Naive thymus-derived CD4-positive, alpha-beta T cell (primary cell): ENCODE measurements at regions of chr1 and their contacts with region 1.

Region 1: GRCh38 chr1:147494998-147495580 is 46.2 kb upstream of the BCL9 start:
- DNase-seq: peak; percentile 27 to 73 (median 65)
- ATAC-seq: peak; percentile 94
- H3K4me3 ChIP-seq: no peak overlapping the region
- H3K4me3 Mint-ChIP-seq: peak overlapping the region in 1 of 10 donors; percentile 49
- H3K27ac ChIP-seq: no peak overlapping the region
- H3K27ac Mint-ChIP-seq: peak overlapping the region in 1 of 9 donors; percentile 33
- H3K4me1 ChIP-seq: no peaks in the 10 kb centered on the region
- H3K4me1 Mint-ChIP-seq: peaks cover 0 to 7% (median 0%) of the 10 kb centered on the region in 7 donors
- H3K27me3 ChIP-seq: peaks cover 0 to 4% of the 10 kb centered on the region in 2 donors
- H3K27me3 Mint-ChIP-seq: peaks cover 0 to 18% (median 0%) of the 10 kb centered on the region in 5 donors

Region 2: DNA sequence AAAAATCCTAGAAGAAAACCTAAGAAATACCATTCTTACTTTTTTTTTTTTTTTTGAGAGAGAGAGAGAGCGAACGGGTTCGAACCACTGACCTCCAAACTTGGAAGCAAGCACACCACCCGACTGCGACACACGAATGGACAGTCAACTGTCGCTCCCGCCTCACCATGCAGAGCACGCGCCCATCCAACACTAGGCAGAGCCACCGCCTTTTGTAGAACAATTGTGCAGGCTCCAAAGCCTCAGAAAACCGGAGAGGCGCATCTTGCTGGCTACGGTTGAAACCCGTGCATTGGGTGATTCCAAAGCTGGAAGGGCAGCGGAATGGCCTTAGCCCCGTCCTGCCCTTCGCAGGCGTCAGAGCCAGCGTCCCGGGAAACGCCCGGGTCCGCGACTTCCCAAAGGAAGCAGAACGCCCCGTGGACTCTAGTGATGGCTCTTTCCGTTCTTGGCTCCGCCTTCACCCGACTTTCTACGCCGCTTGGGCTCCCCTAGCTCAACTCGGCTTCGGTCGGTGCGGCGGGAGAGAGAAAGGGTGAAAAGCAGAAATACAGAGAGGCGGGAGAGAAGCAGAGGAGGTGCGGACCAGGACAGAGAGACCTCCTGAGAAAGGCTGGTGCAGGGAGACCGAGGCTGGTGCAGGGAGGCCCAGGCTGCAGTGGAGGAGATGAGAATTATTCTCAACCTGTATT is 422.6 kb before region 1 on chr1:
- CTCF ChIA-PET with region 1: no interaction called
- POLR2A ChIA-PET with region 1: no interaction called
- intact Hi-C with region 1: no loop called
- DNase-seq: peak in 3 of 9 donors; percentile 17 to 22 (median 18)
- ATAC-seq: no peak
- H3K4me3 ChIP-seq: peak overlapping the region; percentile 14
- H3K4me3 Mint-ChIP-seq: peak overlapping the region; percentile 21 to 90 (median 85)
- H3K27ac ChIP-seq: no peak overlapping the region
- H3K27ac Mint-ChIP-seq: peak overlapping the region in 3 of 9 donors; percentile 9 to 71 (median 26)
- H3K4me1 ChIP-seq: no peaks in the 10 kb centered on the region
- H3K4me1 Mint-ChIP-seq: peaks cover 4 to 39% (median 18%) of the 10 kb centered on the region in 7 donors
- H3K27me3 ChIP-seq: no peaks in the 10 kb centered on the region
- H3K27me3 Mint-ChIP-seq: peaks cover 51 to 78% (median 70%) of the 10 kb centered on the region in 5 donors

Region 3: DNA sequence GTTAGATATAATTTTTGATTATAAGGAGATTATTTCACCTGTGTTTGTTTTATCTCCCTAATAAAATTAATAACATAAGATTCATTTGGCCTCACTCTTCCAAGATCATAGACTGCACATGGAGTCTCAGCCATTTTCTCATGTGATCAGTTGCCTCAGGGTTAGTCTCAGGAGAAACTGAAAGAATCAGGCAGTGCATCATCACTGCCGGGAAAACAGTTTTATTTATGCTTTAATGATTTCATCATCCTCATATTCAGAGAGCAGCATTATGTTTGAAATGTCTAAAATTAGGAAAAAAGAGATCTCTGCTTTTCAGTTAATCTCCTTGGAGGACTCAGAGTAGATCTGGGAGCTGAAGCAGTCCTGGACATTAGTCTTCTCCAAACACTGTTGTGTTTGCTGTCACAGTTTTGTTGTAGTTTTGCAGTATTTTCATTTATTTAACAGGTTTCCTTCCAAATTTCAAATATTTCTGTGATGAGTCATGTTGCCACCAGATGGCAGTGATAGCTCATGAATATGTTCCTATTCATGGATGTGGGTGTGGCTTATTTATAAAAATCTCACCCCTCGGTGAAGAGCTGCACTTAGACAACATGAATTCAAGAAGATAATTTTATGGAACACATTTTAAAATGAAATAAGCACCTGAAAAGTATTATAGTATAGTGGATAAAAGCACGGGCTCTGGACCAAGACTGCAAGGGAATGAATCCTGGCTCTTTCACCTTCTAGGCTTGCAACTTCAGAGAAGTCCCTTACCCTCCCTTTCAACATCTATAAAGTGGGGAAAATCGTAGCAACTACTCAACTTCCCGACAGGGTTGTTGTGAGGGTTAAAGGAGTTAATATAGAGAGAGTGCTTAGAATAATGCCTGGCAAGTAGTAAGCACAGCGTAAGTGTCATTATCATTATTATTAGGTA is 221.4 kb before region 1 on chr1:
- CTCF ChIA-PET with region 1: no interaction called
- POLR2A ChIA-PET with region 1: no interaction called
- intact Hi-C with region 1: loop called in 1 of 2 experiments (anchors 10 kb)
- DNase-seq: peak in 7 of 9 donors; percentile 12 to 57 (median 42)
- ATAC-seq: peak; percentile 65
- H3K4me3 ChIP-seq: no peak overlapping the region
- H3K4me3 Mint-ChIP-seq: no peak overlapping the region
- H3K27ac ChIP-seq: no peak overlapping the region
- H3K27ac Mint-ChIP-seq: no peak overlapping the region
- H3K4me1 ChIP-seq: no peaks in the 10 kb centered on the region
- H3K4me1 Mint-ChIP-seq: peaks cover 0 to 6% (median 4%) of the 10 kb centered on the region in 7 donors
- H3K27me3 ChIP-seq: no peaks in the 10 kb centered on the region
- H3K27me3 Mint-ChIP-seq: no peaks in the 10 kb centered on the region

Region 4: GRCh38 chr1:147579532-147579931 is 84.4 kb after region 1 on chr1:
- CTCF ChIA-PET with region 1: no interaction called
- POLR2A ChIA-PET with region 1: no interaction called
- intact Hi-C with region 1: loop called in 1 of 2 experiments (anchors 5 kb)
- DNase-seq: no peak
- ATAC-seq: no peak
- H3K4me3 ChIP-seq: no peak overlapping the region
- H3K4me3 Mint-ChIP-seq: peak overlapping the region in 9 of 10 donors; percentile 50 to 73 (median 60)
- H3K27ac ChIP-seq: no peak overlapping the region
- H3K27ac Mint-ChIP-seq: peak overlapping the region in 4 of 9 donors; percentile 4 to 39 (median 23)
- H3K4me1 ChIP-seq: peaks cover 13 to 17% of the 10 kb centered on the region in 2 donors
- H3K4me1 Mint-ChIP-seq: peaks cover 17 to 39% (median 30%) of the 10 kb centered on the region in 7 donors
- H3K27me3 ChIP-seq: peaks cover 0 to 5% of the 10 kb centered on the region in 2 donors
- H3K27me3 Mint-ChIP-seq: peaks cover 0 to 50% (median 39%) of the 10 kb centered on the region in 5 donors

Region 5: DNA sequence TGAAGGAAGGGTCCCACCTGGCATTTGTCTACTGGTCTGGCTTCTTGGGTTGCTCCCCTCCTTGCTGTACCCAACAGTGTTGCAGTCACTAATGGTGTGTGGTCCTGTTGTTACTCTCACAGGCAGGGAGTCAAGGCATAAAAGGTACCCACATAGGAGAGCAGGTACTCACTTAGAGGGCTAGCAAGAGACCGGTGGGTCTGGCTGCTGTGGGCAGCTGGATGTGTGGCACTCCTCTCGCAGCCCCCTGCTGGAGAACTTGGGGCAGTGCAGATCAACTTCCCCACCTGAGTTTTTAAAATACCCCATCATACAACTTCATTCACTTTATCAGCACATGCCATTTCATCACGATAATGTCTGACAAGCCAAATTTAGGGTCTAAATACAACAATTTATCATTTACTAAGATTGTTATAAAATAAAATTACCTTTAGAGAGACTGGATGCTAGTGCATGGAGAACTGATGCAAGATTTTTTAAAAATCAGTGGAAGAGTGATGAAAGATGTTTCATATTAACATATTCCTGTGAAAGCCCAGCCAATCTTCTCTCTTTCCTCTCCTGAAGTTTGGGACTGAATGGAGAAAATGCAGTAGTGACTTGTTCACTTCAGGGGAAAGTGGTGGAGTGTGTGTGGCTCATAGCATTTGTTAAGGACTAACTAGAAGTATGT is 132.5 kb after region 1 on chr1:
- CTCF ChIA-PET with region 1: interaction called, 8 read pairs
- POLR2A ChIA-PET with region 1: no interaction called
- intact Hi-C with region 1: loop called (anchors 1 kb)
- DNase-seq: peak; percentile 24 to 63 (median 44)
- ATAC-seq: peak; percentile 79
- H3K4me3 ChIP-seq: no peak overlapping the region
- H3K4me3 Mint-ChIP-seq: peak overlapping the region in 1 of 10 donors; percentile 20
- H3K27ac ChIP-seq: no peak overlapping the region
- H3K27ac Mint-ChIP-seq: no peak overlapping the region
- H3K4me1 ChIP-seq: peaks cover 0 to 34% of the 10 kb centered on the region in 2 donors
- H3K4me1 Mint-ChIP-seq: peaks cover 23 to 42% (median 35%) of the 10 kb centered on the region in 7 donors
- H3K27me3 ChIP-seq: no peaks in the 10 kb centered on the region
- H3K27me3 Mint-ChIP-seq: no peaks in the 10 kb centered on the region

Region 6: GRCh38 chr1:147890177-147890790 is 395.2 kb after region 1 on chr1:
- CTCF ChIA-PET with region 1: interaction called, 7 read pairs
- POLR2A ChIA-PET with region 1: no interaction called
- intact Hi-C with region 1: loop called (anchors 1 kb)
- DNase-seq: peak in 8 of 9 donors; percentile 7 to 68 (median 44)
- ATAC-seq: peak; percentile 78
- H3K4me3 ChIP-seq: no peak overlapping the region
- H3K4me3 Mint-ChIP-seq: no peak overlapping the region
- H3K27ac ChIP-seq: no peak overlapping the region
- H3K27ac Mint-ChIP-seq: no peak overlapping the region
- H3K4me1 ChIP-seq: no peaks in the 10 kb centered on the region
- H3K4me1 Mint-ChIP-seq: peaks cover 0 to 4% (median 0%) of the 10 kb centered on the region in 7 donors
- H3K27me3 ChIP-seq: no peaks in the 10 kb centered on the region
- H3K27me3 Mint-ChIP-seq: peaks cover 0 to 18% (median 0%) of the 10 kb centered on the region in 5 donors